Activated B cell treated with CpG ODN at 0.5 μM for 24 hours (primary cell): ENCODE measurements at regions of chr3 and their contacts with region 1.

Region 1: DNA sequence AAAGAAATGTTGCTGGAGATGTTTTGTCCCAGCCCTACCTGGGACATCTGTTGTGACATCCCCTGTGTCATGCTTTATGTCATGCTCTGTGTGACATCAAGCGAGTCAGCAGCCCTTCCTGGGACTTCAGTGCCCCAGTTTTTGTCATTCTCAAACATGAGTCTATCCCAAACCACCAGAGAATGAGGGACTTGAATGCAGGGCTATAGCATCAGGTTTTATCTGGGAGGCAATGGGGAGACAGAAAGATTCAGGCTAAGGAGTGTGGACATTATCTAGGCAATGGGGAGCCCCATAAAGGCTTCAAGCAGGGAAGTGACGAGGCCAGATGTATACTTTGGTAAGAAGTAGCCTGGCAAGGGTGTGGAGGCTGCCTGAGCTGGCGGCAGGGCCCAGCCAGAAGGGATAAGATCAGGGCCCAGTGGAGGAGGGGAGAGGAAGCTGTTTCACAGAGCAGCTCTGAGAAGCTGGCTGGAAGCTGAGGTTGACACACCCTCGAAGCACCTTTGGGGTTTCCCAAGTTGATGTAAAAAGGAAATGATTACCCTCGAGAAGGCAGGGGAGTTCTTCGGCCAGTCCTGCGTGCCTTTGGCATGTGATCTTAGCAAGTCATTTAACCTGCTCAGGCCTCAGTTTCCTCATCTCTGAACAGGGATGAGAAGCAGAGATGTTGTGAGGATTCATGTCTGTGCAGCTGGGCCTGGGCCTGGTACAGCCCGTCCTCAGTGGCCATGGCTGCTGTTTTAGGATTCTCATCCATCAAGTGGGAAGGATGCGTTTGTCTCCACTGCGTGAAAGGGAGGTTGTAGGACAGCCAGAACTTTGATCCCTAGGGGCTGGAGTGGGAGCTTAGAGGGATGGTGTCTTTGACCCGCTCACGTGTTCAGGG is 34.3 kb downstream of the IRAK2 start:
- DNase-seq: peak; percentile 47
- ATAC-seq: peak; percentile 67
- H3K4me3 Mint-ChIP-seq: peak overlapping the region; percentile 71
- H3K27ac Mint-ChIP-seq: peak overlapping the region; percentile 99
- H3K4me1 Mint-ChIP-seq: peaks cover 82% of the 10 kb centered on the region
- H3K27me3 Mint-ChIP-seq: no peaks in the 10 kb centered on the region
- CTCF ChIP-seq: no peak

Region 2: DNA sequence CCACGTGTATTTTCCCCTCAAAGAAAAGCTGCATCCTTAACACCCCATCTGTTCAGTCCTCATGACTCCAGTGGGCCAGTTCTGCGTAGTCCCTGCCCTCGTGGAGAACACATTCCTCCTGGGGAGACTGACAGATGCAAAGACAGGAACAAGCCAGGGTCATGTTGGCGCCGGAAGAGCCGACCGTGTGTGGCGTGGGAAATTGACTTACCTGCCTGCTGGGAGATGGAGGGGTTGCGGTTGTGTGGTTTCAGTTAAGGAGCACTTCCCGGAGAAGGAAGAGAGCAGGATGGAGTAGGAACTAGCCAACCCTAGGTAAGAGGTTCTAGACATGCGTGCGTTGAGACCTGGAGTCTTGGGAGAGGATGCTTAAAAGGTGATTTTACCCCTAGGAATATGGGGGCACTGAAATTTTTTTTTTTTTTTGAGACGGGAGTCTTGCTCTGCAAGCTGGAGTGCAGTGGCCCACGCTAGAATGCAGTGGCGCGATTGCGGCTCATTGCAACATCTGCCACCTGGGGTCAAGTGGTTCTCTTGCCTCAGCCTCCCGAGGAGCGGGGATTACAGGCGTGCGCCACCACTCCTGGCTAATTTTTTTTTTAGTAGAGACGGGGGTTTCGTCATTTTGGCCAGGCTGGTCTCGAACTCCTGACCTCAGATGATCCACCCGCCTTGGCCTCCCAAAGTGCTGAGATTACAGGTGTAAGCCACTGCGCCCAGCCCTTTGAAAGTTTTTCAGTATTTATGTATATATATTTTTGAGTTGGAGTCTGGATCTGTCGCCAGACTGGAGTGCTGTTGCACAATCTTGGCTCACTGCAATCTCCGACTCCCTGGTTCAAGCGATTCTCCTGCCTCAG is 56.1 kb before region 1 on chr3:
- CTCF ChIA-PET with region 1: no interaction called
- POLR2A ChIA-PET with region 1: interaction called, 43 read pairs
- intact Hi-C with region 1: no loop called
- DNase-seq: no peak
- ATAC-seq: no peak
- H3K4me3 Mint-ChIP-seq: peak overlapping the region; percentile 97
- H3K27ac Mint-ChIP-seq: peak overlapping the region; percentile 95
- H3K4me1 Mint-ChIP-seq: peaks cover 42% of the 10 kb centered on the region
- H3K27me3 Mint-ChIP-seq: no peaks in the 10 kb centered on the region
- CTCF ChIP-seq: no peak

Region 3: GRCh38 chr3:10164546-10165393 is 34.2 kb before region 1 on chr3 and contains the start of gene IRAK2:
- CTCF ChIA-PET with region 1: interaction called, 5 read pairs
- POLR2A ChIA-PET with region 1: interaction called, 9 read pairs
- intact Hi-C with region 1: loop called (anchors 1 kb)
- DNase-seq: peak; percentile 65
- ATAC-seq: peak; percentile 91
- H3K4me3 Mint-ChIP-seq: peak within 1 kb of the TSS; percentile 86
- H3K27ac Mint-ChIP-seq: no peak within 1 kb of the TSS
- H3K4me1 Mint-ChIP-seq: peaks cover 38% of the 10 kb centered on the region
- H3K27me3 Mint-ChIP-seq: no peaks in the 10 kb centered on the region
- CTCF ChIP-seq: peak; percentile 64
- total RNA-seq, gene IRAK2: 8.6 and 8.8 TPM in 2 replicates

Region 4: GRCh38 chr3:10213156-10213792 is 14.3 kb after region 1 on chr3:
- CTCF ChIA-PET with region 1: interaction called, 3 read pairs
- POLR2A ChIA-PET with region 1: interaction called, 53 read pairs
- intact Hi-C with region 1: loop called (anchors 1 kb)
- DNase-seq: no peak
- ATAC-seq: peak; percentile 89
- H3K4me3 Mint-ChIP-seq: peak overlapping the region; percentile 25
- H3K27ac Mint-ChIP-seq: peak overlapping the region; percentile 81
- H3K4me1 Mint-ChIP-seq: peaks cover 30% of the 10 kb centered on the region
- H3K27me3 Mint-ChIP-seq: no peaks in the 10 kb centered on the region
- CTCF ChIP-seq: no peak

Region 5: DNA sequence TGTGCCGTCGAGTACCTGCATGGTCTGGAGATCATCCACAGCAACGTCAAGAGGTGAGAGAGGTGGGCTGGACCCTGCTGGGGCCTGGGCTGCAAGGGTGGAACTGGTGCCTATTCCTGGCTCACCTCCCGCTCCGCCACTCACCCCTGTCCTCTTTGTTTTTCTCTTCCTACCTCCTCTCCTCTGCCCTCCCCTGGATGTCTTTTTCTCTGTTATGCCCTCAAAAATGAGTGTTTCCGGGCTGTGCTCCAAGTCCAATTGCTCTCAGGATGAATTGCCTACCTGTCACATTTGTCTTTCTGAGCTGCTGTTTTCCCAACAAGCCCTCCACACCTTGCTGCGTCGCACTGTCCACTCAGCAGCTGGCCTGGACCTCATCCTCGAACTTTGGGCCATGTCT is 20.7 kb after region 1 on chr3:
- CTCF ChIA-PET with region 1: interaction called, 43 read pairs
- POLR2A ChIA-PET with region 1: interaction called, 148 read pairs
- intact Hi-C with region 1: loop called (anchors 1 kb)
- DNase-seq: no peak
- ATAC-seq: no peak
- H3K4me3 Mint-ChIP-seq: no peak overlapping the region
- H3K27ac Mint-ChIP-seq: peak overlapping the region; percentile 91
- H3K4me1 Mint-ChIP-seq: peaks cover 54% of the 10 kb centered on the region
- H3K27me3 Mint-ChIP-seq: no peaks in the 10 kb centered on the region
- CTCF ChIP-seq: no peak

Region 6: DNA sequence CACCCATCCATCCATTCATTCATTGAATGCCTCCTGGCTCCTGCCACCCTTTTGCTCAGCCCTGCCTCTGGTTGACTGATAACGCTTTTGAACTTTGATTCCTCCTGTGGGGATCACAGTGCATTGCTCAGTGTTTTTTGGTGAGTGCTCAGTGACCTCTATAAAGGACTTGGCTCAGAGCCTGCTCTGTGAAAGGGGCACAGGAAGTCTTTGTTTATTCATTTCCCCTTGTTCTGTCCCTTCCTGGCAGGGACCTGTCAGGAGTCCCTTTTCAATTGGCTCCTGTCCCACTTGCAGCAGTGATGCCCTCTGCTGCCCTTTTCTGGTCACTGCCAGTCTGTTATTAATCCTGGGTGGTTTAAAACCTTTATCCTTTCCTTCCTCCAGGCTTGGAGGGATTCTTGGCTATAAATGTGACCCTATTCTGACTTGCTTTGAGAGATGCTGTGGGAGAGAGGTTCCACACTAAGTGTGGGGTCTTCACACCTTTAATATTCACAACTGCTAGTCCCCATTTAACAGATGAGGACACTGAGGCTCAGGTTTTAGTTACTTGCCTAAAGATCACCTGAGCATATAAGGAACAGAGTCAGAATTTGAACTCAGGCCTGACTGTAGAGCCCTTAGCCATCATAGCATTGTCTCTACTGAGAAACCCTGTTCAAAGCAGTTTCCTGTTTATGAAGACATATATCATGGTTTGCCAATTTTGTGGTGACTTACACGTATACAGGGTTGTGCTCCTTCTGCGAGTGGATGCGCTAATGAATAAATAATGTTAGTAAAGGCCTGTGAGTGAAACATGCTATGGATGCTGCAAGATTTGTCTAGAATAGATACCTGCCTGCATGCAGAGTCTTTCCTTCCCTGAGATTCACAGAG is 26.0 kb after region 1 on chr3:
- CTCF ChIA-PET with region 1: interaction called, 43 read pairs
- POLR2A ChIA-PET with region 1: interaction called, 148 read pairs
- intact Hi-C with region 1: loop called (anchors 1 kb)
- DNase-seq: peak; percentile 32
- ATAC-seq: peak; percentile 63
- H3K4me3 Mint-ChIP-seq: peak overlapping the region; percentile 48
- H3K27ac Mint-ChIP-seq: peak overlapping the region; percentile 61
- H3K4me1 Mint-ChIP-seq: peaks cover 65% of the 10 kb centered on the region
- H3K27me3 Mint-ChIP-seq: no peaks in the 10 kb centered on the region
- CTCF ChIP-seq: peak; percentile 85

Region 7: GRCh38 chr3:10772271-10773161 is 573.5 kb after region 1 on chr3:
- CTCF ChIA-PET with region 1: no interaction called
- POLR2A ChIA-PET with region 1: no interaction called
- intact Hi-C with region 1: no loop called
- DNase-seq: no peak
- ATAC-seq: no peak
- H3K4me3 Mint-ChIP-seq: no peak overlapping the region
- H3K27ac Mint-ChIP-seq: no peak overlapping the region
- H3K4me1 Mint-ChIP-seq: no peaks in the 10 kb centered on the region
- H3K27me3 Mint-ChIP-seq: peaks cover 39% of the 10 kb centered on the region
- CTCF ChIP-seq: no peak